ENCODE measurements at regions of chr2 and their contacts with region 1.

Region 1: DNA sequence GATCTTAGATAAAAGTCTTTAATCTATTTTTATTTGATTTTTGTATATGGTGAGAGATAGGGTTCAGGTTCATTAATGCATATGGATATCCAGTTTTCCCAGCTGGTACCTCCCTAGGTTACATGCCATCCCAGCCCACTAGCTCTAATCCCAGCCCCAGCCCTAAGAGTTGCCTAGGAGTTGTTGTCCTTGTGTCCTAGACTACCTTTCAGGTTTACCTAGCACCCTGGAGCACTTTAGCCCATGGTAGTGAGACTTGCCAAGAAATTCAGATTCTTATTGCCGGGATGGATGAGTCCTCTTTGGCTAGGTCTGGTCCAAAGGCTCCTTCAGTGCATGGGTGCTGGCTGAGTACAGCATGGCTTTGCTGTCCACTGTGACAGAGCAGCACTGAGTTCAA is 40.5 kb downstream of the ZNF638 start:
- DNase-seq: no peak
- H3K4me3 ChIP-seq: no peak overlapping the region
- H3K27ac ChIP-seq: no peak overlapping the region
- H3K4me1 ChIP-seq: no peaks in the 10 kb centered on the region
- H3K27me3 ChIP-seq: no peaks in the 10 kb centered on the region
- CTCF ChIP-seq: no peak

Region 2: DNA sequence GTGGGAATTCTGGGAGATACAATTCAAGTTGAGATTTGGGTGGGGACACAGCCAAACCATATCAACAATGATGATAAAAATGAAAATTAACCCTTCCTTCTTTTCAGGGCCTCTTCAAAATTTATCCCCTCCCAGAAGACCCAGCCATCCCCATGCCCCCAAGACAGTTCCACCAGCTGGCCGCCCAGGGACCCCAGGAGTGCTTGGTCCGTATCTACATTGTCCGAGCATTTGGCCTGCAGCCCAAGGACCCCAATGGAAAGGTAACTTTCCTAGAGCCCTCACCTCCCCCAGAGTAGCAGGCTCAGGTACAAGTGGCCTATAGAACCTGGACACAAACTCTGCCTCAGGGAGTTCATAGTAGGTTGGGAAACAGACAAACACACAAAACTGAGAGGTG is 286.7 kb after region 1 on chr2:
- CTCF ChIA-PET with region 1: no interaction called
- POLR2A ChIA-PET with region 1: no interaction called
- intact Hi-C with region 1: no loop called
- DNase-seq: no peak
- H3K4me3 ChIP-seq: no peak overlapping the region
- H3K27ac ChIP-seq: no peak overlapping the region
- H3K4me1 ChIP-seq: no peaks in the 10 kb centered on the region
- H3K27me3 ChIP-seq: no peaks in the 10 kb centered on the region
- CTCF ChIP-seq: no peak

Region 3: DNA sequence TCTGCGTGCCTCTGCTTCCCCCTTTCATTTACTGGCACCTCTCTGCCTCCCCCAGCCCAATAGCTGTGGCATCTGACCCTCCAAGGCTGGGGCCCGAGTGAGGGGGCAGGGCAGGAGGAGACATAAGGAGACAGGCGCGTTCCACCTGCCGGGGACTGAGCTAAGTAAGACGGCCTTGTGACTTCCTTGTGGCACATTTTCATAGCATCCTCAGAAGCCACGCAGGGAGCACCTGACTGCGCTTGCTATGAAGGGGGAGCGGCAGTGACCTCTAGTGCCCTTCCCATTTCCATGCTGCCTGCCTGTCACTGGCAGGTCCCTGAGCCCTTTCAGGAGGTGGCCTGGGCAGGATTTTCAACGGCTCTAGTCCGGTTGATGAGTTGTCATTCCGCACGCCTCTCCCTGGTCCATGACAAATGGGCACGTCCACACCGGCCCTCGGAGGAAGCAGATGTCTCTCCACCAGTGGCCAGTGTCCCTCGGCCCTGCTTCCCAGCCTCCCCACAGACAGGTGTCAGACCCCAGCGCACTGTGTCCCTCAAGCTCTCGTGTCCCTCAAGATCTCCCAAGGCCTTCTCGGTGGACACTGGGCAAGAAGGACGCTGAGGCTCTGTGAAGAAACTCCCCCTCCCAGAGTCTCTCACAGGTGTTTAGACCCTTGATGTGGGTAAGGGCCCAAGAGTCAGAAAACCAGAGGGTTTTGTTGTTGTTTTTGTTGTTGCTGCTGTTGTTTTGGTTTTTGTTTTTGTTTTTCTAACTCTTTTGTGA is 733.0 kb after region 1 on chr2:
- CTCF ChIA-PET with region 1: interaction called, 11 read pairs
- POLR2A ChIA-PET with region 1: no interaction called
- intact Hi-C with region 1: no loop called
- DNase-seq: no peak
- H3K4me3 ChIP-seq: no peak overlapping the region
- H3K27ac ChIP-seq: no peak overlapping the region
- H3K4me1 ChIP-seq: no peaks in the 10 kb centered on the region
- H3K27me3 ChIP-seq: no peaks in the 10 kb centered on the region
- CTCF ChIP-seq: no peak

Measured in A673 (cell line).